ENCODE measurements at regions of chr6 and their contacts with region 1.

Region 1: DNA sequence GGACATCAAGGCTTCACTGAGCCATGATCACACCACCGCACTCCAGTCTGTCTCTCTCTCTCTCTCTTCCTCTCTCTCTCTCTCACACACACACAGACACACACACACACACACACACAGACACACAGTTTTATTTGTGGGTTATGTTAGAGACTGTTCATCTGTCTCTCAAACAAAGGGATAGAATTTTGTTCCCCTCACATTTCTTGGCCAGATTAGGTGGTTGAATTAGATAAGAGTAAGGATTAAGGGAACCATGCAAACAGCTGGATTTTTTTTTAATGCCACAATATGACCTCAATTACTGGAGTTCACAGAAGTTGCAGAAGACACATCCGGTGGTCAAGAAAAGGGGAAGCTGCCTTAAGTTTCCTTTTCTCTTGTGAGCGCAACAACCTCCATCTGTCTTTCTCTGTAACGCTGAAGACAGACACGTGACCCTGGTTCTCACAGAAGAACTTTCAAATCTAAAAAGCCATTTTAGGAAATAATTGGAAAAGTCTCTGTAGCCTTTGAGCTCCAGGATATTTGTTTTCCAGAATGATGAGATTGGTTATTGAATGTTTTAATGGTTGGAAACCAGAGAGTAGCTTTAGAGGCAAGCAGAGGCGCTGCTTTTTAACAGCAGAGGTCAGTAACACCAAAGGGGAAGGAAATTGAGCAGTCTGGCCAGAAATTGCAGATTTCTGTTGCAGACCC is 33.0 kb upstream of the LGSN start:
- DNase-seq: peak; percentile 49
- ATAC-seq: peak; percentile 82
- H3K4me3 ChIP-seq: no peak overlapping the region
- H3K27ac ChIP-seq: no peak overlapping the region
- H3K4me1 ChIP-seq: peaks cover 4% of the 10 kb centered on the region
- H3K27me3 ChIP-seq: no peaks in the 10 kb centered on the region
- CTCF ChIP-seq: peak; percentile 72
- POLR2A ChIP-seq: no peak
- RAD21 ChIP-seq: peak; percentile 70

Region 2: GRCh38 chr6:62737792-62738191 is 614.9 kb before region 1 on chr6:
- CTCF ChIA-PET with region 1: no interaction called
- POLR2A ChIA-PET with region 1: no interaction called
- dilution Hi-C with region 1: no loop called
- in situ Hi-C with region 1: no loop called
- intact Hi-C with region 1: no loop called
- DNase-seq: no peak
- ATAC-seq: no peak
- H3K4me3 ChIP-seq: no peak overlapping the region
- H3K27ac ChIP-seq: no peak overlapping the region
- H3K4me1 ChIP-seq: no peaks in the 10 kb centered on the region
- H3K27me3 ChIP-seq: no peaks in the 10 kb centered on the region
- CTCF ChIP-seq: no peak
- POLR2A ChIP-seq: no peak
- RAD21 ChIP-seq: no peak

Region 3: GRCh38 chr6:63571881-63572732 is 219.4 kb after region 1 on chr6 and contains the starts of genes LOC128125822 and PTP4A1:
- CTCF ChIA-PET with region 1: no interaction called
- POLR2A ChIA-PET with region 1: no interaction called
- dilution Hi-C with region 1: no loop called
- in situ Hi-C with region 1: loop called (anchors 25 kb)
- intact Hi-C with region 1: loop called (anchors 1 kb)
- DNase-seq: peak; percentile 98
- ATAC-seq: peak; percentile 93
- H3K4me3 ChIP-seq: peak within 1 kb of the TSS; percentile 85
- H3K27ac ChIP-seq: peak within 1 kb of the TSS; percentile 99
- H3K4me1 ChIP-seq: no peaks in the 10 kb centered on the region
- H3K27me3 ChIP-seq: no peaks in the 10 kb centered on the region
- CTCF ChIP-seq: 0 out of 2 replicates have a peak, but pooled peaks have one; percentile 22
- POLR2A ChIP-seq: peak; percentile 99
- RAD21 ChIP-seq: no peak
- total RNA-seq, gene PTP4A1: 53.1 and 60.0 TPM in 2 replicates

Region 4: GRCh38 chr6:63598049-63599036 is 245.6 kb after region 1 on chr6:
- CTCF ChIA-PET with region 1: interaction called, 3 read pairs
- POLR2A ChIA-PET with region 1: no interaction called
- dilution Hi-C with region 1: no loop called
- in situ Hi-C with region 1: no loop called
- intact Hi-C with region 1: loop called (anchors 1 kb)
- DNase-seq: peak; percentile 49
- ATAC-seq: peak; percentile 97
- H3K4me3 ChIP-seq: peak overlapping the region; percentile 66
- H3K27ac ChIP-seq: no peak overlapping the region
- H3K4me1 ChIP-seq: no peaks in the 10 kb centered on the region
- H3K27me3 ChIP-seq: no peaks in the 10 kb centered on the region
- CTCF ChIP-seq: peak; percentile 77
- POLR2A ChIP-seq: no peak
- RAD21 ChIP-seq: peak; percentile 76

Region 5: DNA sequence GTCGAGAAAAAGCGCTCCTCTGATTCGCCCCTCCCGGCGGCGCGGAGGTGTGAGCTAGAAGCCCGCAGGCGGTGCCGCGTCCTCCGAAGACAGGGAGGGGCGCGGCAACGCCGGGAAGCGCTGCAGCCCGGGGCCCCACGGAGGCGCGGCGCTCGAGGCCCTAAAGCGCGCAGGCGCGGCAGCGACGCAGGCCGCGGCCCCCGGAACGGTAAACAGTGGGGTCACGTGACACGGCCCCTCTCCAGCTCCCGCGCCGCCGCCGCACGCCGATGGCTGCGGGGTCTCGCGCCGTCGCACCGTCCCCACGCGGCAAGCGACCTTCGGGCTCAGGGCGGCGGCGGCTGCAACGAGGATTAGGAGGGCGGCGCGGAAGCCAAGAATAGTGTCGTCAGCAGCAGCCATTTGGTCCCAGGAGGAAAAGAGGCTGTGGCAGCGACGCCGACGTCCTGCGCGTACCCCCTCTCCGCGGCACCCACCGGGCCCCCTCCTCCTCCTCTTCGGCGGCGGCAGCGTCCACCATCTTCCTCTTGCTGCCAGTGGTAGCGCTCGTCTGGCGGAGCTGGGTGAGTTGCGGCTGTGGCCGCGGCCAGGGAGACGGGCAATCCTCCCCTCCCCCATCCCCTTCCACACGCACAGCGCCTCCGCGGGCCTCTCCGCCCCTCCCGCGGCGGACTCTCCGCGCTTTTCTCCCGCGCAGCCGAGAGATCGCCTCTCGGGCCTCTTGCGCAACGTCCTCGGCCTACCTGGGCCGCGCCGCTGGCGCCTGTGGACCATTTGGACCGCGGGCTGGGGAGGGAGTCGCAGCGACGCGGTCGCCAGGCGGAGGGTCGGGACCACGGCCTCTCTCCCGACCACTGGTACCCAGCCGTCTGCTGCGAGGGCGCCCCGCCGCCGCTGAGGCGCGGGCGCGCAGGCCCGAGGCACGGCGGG is 283.1 kb after region 1 on chr6 and contains the start of gene PHF3:
- CTCF ChIA-PET with region 1: no interaction called
- POLR2A ChIA-PET with region 1: no interaction called
- dilution Hi-C with region 1: no loop called
- in situ Hi-C with region 1: no loop called
- intact Hi-C with region 1: loop called (anchors 5 kb)
- DNase-seq: peak; percentile 84
- ATAC-seq: peak; percentile 92
- H3K4me3 ChIP-seq: peak within 1 kb of the TSS; percentile 95
- H3K27ac ChIP-seq: peak within 1 kb of the TSS; percentile 85
- H3K4me1 ChIP-seq: no peaks in the 10 kb centered on the region; the same call in 1 of the 2 replicates
- H3K27me3 ChIP-seq: peaks cover 3% of the 10 kb centered on the region
- CTCF ChIP-seq: 0 out of 2 replicates have a peak, but pooled peaks have one; percentile 7
- POLR2A ChIP-seq: peak; percentile 78
- RAD21 ChIP-seq: no peak
- total RNA-seq, gene PHF3: 27.8 and 46.9 TPM in 2 replicates

Region 6: DNA sequence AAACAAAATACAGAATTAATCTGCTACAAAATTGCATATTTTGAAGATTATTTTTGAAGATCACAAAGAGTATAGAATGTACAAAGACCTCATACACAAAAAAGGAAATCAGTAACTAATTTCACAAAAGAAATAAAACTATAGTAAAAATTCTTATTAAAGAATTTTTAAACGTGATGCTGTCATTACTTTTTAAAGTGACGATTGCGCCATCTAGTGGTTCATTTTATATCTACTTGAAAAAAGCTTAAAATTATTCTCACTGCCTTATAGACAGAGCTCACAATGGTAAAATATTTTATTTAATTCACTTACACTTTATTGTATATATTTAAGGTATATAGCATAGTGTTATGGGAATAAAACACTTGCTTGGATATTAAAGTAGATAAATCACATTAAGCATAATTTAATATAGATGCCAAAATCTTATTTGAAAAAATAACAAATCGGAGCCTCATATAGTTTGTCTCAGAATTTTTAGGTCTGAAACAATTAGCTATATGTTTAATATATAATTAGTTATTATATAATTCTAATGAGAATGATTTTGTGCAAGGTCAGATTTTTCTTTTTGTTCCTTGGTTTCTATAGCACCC is 411.7 kb after region 1 on chr6:
- CTCF ChIA-PET with region 1: interaction called, 9 read pairs
- POLR2A ChIA-PET with region 1: no interaction called
- dilution Hi-C with region 1: no loop called
- in situ Hi-C with region 1: loop called (anchors 5 kb)
- intact Hi-C with region 1: loop called (anchors 1 kb)
- DNase-seq: peak; percentile 52
- ATAC-seq: peak; percentile 64
- H3K4me3 ChIP-seq: no peak overlapping the region
- H3K27ac ChIP-seq: no peak overlapping the region
- H3K4me1 ChIP-seq: no peaks in the 10 kb centered on the region
- H3K27me3 ChIP-seq: peaks cover 4% of the 10 kb centered on the region
- CTCF ChIP-seq: peak; percentile 61
- POLR2A ChIP-seq: no peak
- RAD21 ChIP-seq: peak; percentile 59

Region 7: DNA sequence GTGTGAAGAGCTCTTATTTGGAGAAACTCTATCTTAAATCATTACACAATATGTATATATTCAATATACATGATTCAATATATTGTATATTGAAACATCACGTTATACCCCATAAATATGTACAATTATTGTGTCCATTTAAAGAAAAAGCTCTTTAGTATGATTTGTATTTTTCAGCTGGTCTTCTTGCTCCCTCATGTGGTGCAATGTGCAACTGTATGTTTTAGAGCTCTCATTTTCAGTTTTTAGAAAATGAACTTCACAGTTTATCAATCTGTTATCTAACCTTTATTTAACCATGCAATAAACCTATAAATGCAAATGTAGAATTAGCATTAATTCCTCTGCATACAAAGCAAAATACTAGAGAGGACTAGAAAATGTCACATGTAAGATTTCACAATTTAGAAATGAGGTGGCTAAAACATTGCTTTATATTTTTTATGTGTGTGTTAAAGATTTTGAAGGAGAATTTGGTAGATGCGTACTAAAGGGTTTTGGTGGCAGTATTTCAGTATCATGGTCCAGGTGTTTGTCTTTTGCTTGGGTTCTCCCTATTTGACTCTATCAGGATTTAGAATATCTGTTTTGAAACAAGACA is 450.0 kb after region 1 on chr6:
- CTCF ChIA-PET with region 1: interaction called, 18 read pairs
- POLR2A ChIA-PET with region 1: no interaction called
- dilution Hi-C with region 1: no loop called
- in situ Hi-C with region 1: no loop called
- intact Hi-C with region 1: loop called (anchors 1 kb)
- DNase-seq: peak; percentile 53
- ATAC-seq: no peak
- H3K4me3 ChIP-seq: no peak overlapping the region
- H3K27ac ChIP-seq: no peak overlapping the region
- H3K4me1 ChIP-seq: peaks cover 15% of the 10 kb centered on the region
- H3K27me3 ChIP-seq: no peaks in the 10 kb centered on the region
- CTCF ChIP-seq: peak; percentile 83
- POLR2A ChIP-seq: no peak
- RAD21 ChIP-seq: peak; percentile 86

Region 8: GRCh38 chr6:63910863-63911551 is 558.3 kb after region 1 on chr6:
- CTCF ChIA-PET with region 1: no interaction called
- POLR2A ChIA-PET with region 1: no interaction called
- dilution Hi-C with region 1: no loop called
- in situ Hi-C with region 1: no loop called
- intact Hi-C with region 1: loop called (anchors 10 kb)
- DNase-seq: no peak
- ATAC-seq: no peak
- H3K4me3 ChIP-seq: no peak overlapping the region
- H3K27ac ChIP-seq: no peak overlapping the region
- H3K4me1 ChIP-seq: no peaks in the 10 kb centered on the region
- H3K27me3 ChIP-seq: no peaks in the 10 kb centered on the region
- CTCF ChIP-seq: no peak
- POLR2A ChIP-seq: no peak
- RAD21 ChIP-seq: no peak